Left ventricle myocardium inferior (tissue), 1 donor: ENCODE measurements at regions of chr6 and their contacts with region 1.

Region 1: GRCh38 chr6:18503593-18504231 is 116.6 kb downstream of the RNF144B start:
- DNase-seq: peak; percentile 20
- H3K4me3 ChIP-seq: peak overlapping the region; percentile 58
- H3K27ac ChIP-seq: peak overlapping the region; percentile 49
- H3K4me1 ChIP-seq: peaks cover 13% of the 10 kb centered on the region
- H3K27me3 ChIP-seq: no peaks in the 10 kb centered on the region
- CTCF ChIP-seq: peak; percentile 92

Region 2: DNA sequence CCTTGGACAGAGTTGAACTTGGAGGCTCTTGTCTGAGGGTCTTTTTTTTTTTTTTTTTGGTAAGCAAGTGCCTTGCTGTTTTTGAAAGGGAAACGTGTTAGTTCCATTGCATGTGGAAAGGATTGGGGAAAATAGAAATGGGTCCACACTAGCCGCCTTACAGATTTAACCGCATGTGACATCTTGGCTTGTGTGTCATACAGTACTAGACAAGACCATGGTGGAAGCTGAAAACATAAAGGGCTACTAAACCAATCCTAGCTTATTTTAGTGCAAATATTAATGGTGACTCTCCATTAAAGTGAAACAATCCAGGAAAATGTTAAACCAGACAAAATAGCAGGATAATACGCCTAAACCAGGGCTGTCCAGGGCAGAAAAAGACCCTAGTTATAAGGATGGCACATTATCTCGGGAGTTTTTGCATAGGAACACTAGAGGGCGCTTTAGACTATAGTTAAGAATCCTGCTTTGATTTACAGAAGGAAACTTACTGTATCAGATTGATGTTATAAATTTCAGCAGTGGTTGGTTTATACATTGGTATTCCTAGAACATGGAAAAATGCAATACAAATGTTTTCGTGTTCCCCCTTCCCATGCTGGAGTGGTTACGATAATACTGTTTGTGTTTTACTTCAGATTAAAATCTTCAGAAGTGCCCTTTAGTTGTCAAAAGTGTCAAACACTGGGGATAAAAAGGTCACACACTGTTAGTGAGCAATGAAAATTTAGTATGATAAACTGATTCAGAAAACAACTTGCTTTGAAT is 179.6 kb before region 1 on chr6:
- intact Hi-C with region 1: loop called (anchors 2 kb)
- DNase-seq: no peak
- H3K4me3 ChIP-seq: no peak overlapping the region
- H3K27ac ChIP-seq: no peak overlapping the region
- H3K4me1 ChIP-seq: peaks cover 8% of the 10 kb centered on the region
- H3K27me3 ChIP-seq: no peaks in the 10 kb centered on the region
- CTCF ChIP-seq: peak; percentile 83

Region 3: DNA sequence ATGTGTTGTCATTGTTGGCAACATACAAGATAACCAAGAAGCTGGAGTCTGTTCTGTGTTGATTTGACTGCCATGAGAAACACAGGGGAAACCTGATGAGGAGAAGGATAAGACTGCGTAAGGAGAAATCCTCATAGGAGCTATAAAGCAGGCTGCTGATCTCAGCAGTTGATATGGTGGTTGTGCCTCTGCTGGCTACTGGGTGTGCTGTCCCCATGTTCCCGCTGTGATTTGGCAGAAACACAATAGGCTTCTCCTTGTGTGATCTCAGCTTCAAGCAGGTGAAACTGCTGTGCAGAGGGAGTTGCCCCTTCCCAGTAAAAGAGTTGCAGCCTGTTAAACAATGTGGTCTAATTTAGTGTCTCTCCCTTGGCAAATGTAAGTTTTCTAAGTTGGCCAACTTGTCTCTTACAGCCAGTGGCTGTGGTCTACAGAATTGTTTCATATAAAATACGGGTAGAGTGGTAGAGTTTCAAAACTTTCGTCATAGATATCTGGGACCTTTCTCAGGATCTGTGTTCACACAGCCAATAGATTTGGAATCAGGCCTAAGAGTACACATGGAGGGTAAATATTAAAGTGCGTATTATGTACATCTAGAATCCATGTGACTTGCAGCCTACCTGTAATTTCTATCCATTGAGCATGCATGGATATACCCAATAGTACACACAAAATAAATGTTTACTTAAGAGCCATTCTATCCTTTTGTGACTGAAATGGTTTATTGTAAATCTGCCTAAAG is 38.1 kb before region 1 on chr6:
- intact Hi-C with region 1: no loop called
- DNase-seq: no peak
- H3K4me3 ChIP-seq: no peak overlapping the region
- H3K27ac ChIP-seq: no peak overlapping the region
- H3K4me1 ChIP-seq: peaks cover 6% of the 10 kb centered on the region
- H3K27me3 ChIP-seq: no peaks in the 10 kb centered on the region
- CTCF ChIP-seq: no peak

Region 4: DNA sequence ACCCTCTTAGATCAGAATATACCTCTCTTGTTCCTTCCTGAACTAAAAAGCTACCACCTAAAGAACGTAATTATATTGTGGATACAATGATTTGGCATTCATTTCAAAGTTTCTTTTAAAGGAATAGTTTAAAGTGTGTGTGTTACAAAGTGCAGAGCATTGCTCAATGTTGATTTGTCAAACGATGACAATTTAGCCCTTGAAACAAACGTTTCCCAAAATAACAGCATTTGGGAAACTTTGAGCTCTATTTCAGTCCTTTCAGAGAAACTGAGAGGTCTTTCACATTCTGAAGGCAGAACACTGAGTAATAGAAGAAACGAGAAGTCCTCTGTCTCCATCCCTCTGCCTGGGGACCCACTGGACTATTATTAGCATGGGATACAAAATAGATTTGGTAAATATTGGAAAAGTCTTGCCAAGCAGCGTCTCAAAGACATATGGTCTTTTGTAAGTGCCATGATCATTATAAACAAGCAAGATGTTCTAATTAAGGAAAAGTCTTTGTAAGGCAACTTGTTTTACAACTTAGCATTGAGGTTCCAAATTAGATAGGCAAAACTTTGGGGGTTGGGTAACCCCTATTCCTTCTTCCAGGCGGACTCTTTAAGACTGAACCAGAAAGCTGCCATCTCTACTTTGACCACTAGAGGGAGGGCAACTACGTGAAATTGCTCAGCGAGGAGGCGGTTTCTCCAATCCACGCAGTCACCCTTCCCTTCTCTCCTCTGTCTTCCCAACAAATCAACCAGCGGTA is 92.2 kb after region 1 on chr6:
- intact Hi-C with region 1: no loop called
- DNase-seq: no peak
- H3K4me3 ChIP-seq: no peak overlapping the region
- H3K27ac ChIP-seq: no peak overlapping the region
- H3K4me1 ChIP-seq: no peaks in the 10 kb centered on the region
- H3K27me3 ChIP-seq: peaks cover 15% of the 10 kb centered on the region
- CTCF ChIP-seq: peak; percentile 91